ENCODE measurements at regions of chr9 and their contacts with region 1.

Region 1: DNA sequence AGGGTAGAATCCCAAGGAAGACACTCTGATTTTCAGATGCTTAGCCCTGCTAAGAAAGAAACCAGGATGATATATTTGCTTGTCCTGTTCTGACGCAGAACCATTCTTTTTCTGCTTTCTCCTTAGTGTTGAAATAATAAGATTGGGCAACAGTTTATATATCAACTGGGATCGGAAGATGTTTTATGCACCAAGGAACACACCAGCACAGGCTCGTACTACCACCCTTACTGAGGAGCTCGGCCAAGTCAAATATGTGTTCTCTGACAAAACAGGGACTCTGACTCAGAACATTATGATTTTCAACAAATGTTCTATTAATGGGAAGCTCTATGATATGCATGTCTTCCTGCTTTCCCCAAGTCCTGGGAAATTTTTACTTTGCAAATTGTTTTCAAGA is 19.0 kb upstream of the RUSC2 start:
- DNase-seq: peak in 1 of 6 donors; percentile 36
- ATAC-seq: peak in 3 of 4 donors; percentile 77 to 86 (median 81)
- H3K4me3 ChIP-seq: no peak overlapping the region
- H3K27ac ChIP-seq: no peak overlapping the region
- H3K4me1 ChIP-seq: peaks cover 0 to 6% (median 0%) of the 10 kb centered on the region in 3 donors
- H3K27me3 ChIP-seq: no peaks in the 10 kb centered on the region
- CTCF ChIP-seq: no peak

Region 2: DNA sequence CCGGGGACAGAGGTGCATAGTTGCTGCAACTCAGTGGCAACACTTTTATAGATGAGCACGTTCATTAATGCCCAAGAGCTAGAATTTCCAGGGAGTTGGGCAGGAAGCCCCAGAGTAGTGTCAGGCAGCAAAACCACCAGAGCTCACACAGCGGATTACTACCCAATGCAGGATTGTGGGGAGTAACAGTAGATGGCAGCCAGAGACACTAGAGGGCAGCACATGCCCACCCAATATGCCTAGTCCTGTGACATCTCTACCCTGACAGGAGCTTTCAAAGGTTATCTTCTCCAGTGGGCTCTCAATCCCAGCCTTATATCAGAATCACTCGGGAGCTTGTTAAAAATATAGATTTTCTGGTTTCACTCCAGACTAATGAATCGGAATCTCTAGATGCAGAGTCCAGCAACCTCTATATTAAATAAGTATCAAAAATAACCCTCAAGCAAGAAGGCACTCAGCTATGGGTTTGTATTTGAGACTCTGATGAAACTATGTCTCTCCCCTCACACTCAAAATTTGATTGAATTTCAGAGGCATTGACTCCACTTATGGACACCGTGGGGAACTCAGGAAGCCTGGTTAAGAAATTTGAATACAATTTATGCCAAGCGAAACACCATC is 571.2 kb before region 1 on chr9:
- intact Hi-C with region 1: loop called in 1 of 3 experiments (anchors 10 kb)
- DNase-seq: peak; percentile 52 to 78 (median 61)
- ATAC-seq: peak; percentile 92 to 100 (median 100)
- H3K4me3 ChIP-seq: no peak overlapping the region
- H3K27ac ChIP-seq: no peak overlapping the region
- H3K4me1 ChIP-seq: no peaks in the 10 kb centered on the region
- H3K27me3 ChIP-seq: peaks cover 0 to 7% (median 0%) of the 10 kb centered on the region in 4 donors
- CTCF ChIP-seq: peak; percentile 58 to 80 (median 72)

Measured in pancreas (tissue), 10 donors.